PC-3 (cell line): ENCODE measurements at regions of chr6 and their contacts with region 1.

Region 1: GRCh38 chr6:169654598-169655391 is 47.0 kb downstream of the WDR27 start:
- DNase-seq: peak; percentile 74
- ATAC-seq: peak; percentile 89
- H3K4me3 ChIP-seq: peak overlapping the region; percentile 79
- H3K27ac ChIP-seq: no peak overlapping the region
- H3K4me1 ChIP-seq: peaks cover 6% of the 10 kb centered on the region; the same call in 1 of the 2 replicates
- H3K27me3 ChIP-seq: no peaks in the 10 kb centered on the region
- CTCF ChIP-seq: peak; percentile 64

Region 2: GRCh38 chr6:168895102-168895812 is 759.5 kb before region 1 on chr6:
- CTCF ChIA-PET with region 1: no interaction called
- POLR2A ChIA-PET with region 1: no interaction called
- intact Hi-C with region 1: loop called (anchors 5 kb)
- DNase-seq: peak; percentile 77
- ATAC-seq: peak; percentile 82
- H3K4me3 ChIP-seq: 0 out of 2 replicates have a peak overlapping the region, but pooled peaks have one; percentile 32
- H3K27ac ChIP-seq: no peak overlapping the region
- H3K4me1 ChIP-seq: peaks cover 3% of the 10 kb centered on the region; the same call in 1 of the 2 replicates
- H3K27me3 ChIP-seq: 0 out of 2 replicates have a peak, but pooled peaks cover 9% of the 10 kb centered on the region
- CTCF ChIP-seq: peak; percentile 86

Region 3: GRCh38 chr6:169487579-169488436 is 167.0 kb before region 1 on chr6:
- CTCF ChIA-PET with region 1: no interaction called
- POLR2A ChIA-PET with region 1: no interaction called
- intact Hi-C with region 1: no loop called
- DNase-seq: peak; percentile 4
- ATAC-seq: no peak
- H3K4me3 ChIP-seq: no peak overlapping the region
- H3K27ac ChIP-seq: no peak overlapping the region
- H3K4me1 ChIP-seq: no peaks in the 10 kb centered on the region
- H3K27me3 ChIP-seq: no peaks in the 10 kb centered on the region
- CTCF ChIP-seq: 0 out of 2 replicates have a peak, but pooled peaks have one; percentile 25

Region 4: DNA sequence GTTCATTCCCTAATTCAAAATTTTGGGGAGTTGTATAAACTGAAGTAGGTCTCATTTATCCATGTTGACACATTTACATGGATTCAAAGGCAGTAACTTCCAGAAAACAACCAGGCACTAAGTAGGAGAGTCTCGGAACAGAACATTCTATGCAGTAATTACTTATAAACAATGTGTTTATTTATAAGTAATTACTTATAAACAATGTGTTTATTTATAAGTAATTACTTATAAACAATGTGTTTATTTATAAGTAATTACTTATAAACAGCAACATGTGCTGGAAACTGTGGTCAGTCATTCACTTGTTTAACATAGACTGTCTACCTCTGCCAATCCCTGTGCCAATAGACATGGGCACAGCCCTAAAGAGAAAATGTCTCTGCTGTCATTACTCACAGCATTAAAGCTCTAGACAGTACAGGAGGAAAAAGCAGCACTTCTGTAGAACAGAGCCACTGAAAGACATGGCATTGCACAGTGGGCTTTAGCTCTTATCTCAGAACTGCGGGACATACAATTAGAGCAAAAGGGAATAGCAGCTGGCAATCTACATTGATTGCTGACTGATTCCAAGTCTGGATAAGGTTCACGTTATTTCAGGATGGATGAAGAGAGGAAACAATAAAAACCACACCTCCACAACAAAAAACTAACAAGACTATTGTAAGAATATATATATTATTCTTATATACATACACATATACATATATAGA is 141.2 kb before region 1 on chr6:
- CTCF ChIA-PET with region 1: interaction called, 4 read pairs
- POLR2A ChIA-PET with region 1: no interaction called
- intact Hi-C with region 1: loop called (anchors 1 kb)
- DNase-seq: no peak
- ATAC-seq: no peak
- H3K4me3 ChIP-seq: no peak overlapping the region
- H3K27ac ChIP-seq: no peak overlapping the region
- H3K4me1 ChIP-seq: no peaks in the 10 kb centered on the region
- H3K27me3 ChIP-seq: no peaks in the 10 kb centered on the region
- CTCF ChIP-seq: no peak

Region 5: GRCh38 chr6:169556758-169557548 is 97.8 kb before region 1 on chr6:
- CTCF ChIA-PET with region 1: no interaction called
- POLR2A ChIA-PET with region 1: no interaction called
- intact Hi-C with region 1: loop called (anchors 1 kb)
- DNase-seq: no peak
- ATAC-seq: no peak
- H3K4me3 ChIP-seq: no peak overlapping the region
- H3K27ac ChIP-seq: no peak overlapping the region
- H3K4me1 ChIP-seq: peaks cover 17% of the 10 kb centered on the region
- H3K27me3 ChIP-seq: no peaks in the 10 kb centered on the region
- CTCF ChIP-seq: no peak